Endothelial cell of umbilical vein (primary cell): ENCODE measurements at regions of chr2 and their contacts with region 1.

Region 1: DNA sequence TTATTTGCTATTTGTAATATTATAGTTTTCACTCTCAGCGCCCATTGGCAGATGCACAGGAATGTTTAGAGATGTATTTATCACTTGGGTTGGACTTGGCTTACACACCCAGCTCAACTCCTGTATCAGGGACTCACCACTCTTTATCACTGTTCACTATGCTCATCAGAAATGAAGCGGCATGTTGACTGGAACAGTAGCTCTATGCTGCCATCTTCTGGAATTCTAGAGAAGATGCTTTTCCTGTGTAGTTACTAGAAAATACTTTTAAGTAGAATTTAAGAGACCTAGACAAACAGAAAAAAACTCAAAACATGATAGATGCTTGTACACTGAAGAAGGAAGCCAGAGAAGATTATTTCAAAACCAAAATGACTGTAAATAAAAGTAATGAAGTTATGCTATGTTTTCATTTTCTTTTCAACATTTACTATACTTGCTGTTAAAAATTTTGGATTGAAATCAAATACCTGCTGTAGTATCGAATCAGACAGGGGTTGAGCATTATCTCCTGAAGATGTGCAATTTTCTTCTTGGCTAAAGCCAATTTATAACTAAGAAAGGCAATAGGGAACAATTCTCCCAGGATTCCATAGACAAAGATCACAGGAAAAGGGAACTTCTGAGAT is 47.4 kb upstream of the NXPH2 start:
- DNase-seq: peak; percentile 66
- H3K4me3 ChIP-seq: no peak overlapping the region
- H3K27ac ChIP-seq: no peak overlapping the region
- H3K4me1 ChIP-seq: no peaks in the 10 kb centered on the region
- H3K27me3 ChIP-seq: no peaks in the 10 kb centered on the region
- CTCF ChIP-seq: peak; percentile 33 to 52
- POLR2A ChIP-seq: no peak

Region 2: GRCh38 chr2:137467246-137467862 is 1360.2 kb before region 1 on chr2:
- CTCF ChIA-PET with region 1: no interaction called
- POLR2A ChIA-PET with region 1: no interaction called
- dilution Hi-C with region 1: no loop called
- intact Hi-C with region 1: loop called (anchors 5 kb)
- DNase-seq: peak; percentile 3
- H3K4me3 ChIP-seq: no peak overlapping the region
- H3K27ac ChIP-seq: no peak overlapping the region
- H3K4me1 ChIP-seq: no peaks in the 10 kb centered on the region
- H3K27me3 ChIP-seq: no peaks in the 10 kb centered on the region
- CTCF ChIP-seq: peak in 1 of 2 donors; percentile 19
- POLR2A ChIP-seq: no peak

Region 3: DNA sequence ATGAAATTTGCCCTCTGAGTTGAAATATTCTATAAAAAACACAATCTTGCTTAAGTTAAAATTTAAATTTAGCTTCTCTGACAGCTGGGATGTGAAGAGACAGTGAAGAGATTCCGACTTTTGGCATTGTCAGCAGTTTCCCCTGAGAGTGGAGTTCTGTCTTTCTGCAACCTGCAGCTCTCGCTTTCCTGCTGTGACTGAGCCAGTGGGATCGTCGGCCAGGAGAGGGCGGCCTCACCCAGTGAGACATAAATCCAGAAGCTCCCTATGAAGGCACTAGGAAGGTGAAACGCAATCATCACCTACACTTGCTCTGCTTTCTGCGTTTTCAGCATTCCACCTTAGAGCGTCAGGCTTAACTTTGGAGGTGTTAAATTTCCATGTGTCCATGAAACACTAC is 938.7 kb before region 1 on chr2:
- CTCF ChIA-PET with region 1: interaction called, 75 read pairs
- POLR2A ChIA-PET with region 1: no interaction called
- dilution Hi-C with region 1: no loop called
- intact Hi-C with region 1: loop called (anchors 1 kb)
- DNase-seq: peak; percentile 31
- H3K4me3 ChIP-seq: no peak overlapping the region
- H3K27ac ChIP-seq: no peak overlapping the region
- H3K4me1 ChIP-seq: no peaks in the 10 kb centered on the region
- H3K27me3 ChIP-seq: no peaks in the 10 kb centered on the region
- CTCF ChIP-seq: peak; percentile 23 to 67
- POLR2A ChIP-seq: no peak

Region 4: DNA sequence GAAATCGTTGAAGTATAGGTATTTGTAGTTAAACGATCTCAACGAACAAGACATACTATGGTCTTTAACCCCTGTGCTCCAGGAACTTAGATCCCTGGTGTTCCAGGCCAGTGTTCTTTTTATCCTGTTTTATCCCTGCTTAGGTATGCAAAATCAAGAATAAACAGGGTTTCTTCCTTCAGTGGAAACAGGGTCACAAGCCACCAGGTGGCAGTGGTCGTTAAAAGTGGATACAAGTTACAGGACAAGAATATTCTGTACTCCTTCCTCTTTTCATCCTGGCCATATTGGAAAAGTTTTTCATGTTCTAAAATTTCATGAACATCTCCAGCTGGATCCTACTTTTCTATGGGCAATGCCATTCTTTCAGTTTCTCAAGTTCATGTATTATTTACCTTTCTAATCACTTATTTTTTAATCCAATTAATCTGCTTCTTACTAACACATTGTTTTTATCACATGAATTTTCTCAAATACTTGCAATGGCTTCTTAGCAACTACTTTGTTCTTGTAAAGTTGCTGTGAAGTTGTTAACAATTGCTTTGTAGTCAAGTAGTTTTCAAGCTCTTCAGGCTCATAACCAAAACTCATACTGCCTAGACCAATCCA is 879.7 kb before region 1 on chr2:
- CTCF ChIA-PET with region 1: no interaction called
- POLR2A ChIA-PET with region 1: no interaction called
- dilution Hi-C with region 1: no loop called
- intact Hi-C with region 1: loop called (anchors 1 kb)
- DNase-seq: peak; percentile 82
- H3K4me3 ChIP-seq: no peak overlapping the region
- H3K27ac ChIP-seq: no peak overlapping the region
- H3K4me1 ChIP-seq: no peaks in the 10 kb centered on the region
- H3K27me3 ChIP-seq: no peaks in the 10 kb centered on the region
- CTCF ChIP-seq: peak; percentile 45 to 62
- POLR2A ChIP-seq: no peak

Region 5: DNA sequence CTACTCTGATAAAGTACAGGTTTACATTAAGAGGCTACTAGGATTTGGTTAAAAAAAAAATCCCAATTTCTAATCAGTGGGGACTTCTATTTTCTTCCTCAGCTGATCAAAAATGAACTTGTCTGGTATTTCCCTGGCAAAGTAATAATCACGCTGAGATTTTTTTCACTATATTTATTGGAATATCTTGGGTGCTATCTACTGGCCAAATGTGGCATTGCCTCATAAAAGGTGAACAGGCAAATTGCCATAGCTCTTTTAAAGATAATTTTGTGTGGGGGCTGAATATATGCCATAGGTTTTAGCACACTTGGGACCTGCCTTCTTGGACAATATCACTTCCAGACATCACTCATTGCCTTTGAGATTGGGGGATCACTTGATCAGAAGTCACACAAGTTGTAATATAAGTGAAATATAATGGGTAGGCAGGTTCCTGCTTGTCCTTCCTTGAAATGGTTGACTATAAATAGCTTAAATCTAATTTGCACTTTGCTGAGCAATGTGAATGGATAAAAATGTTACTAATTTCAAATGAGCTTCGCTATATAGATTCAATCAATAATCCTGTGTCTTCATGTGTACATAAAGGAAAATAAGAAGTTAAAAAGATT is 40.4 kb before region 1 on chr2:
- CTCF ChIA-PET with region 1: interaction called, 19 read pairs
- POLR2A ChIA-PET with region 1: no interaction called
- dilution Hi-C with region 1: no loop called
- intact Hi-C with region 1: no loop called
- DNase-seq: peak; percentile 52
- H3K4me3 ChIP-seq: no peak overlapping the region
- H3K27ac ChIP-seq: no peak overlapping the region
- H3K4me1 ChIP-seq: no peaks in the 10 kb centered on the region
- H3K27me3 ChIP-seq: peaks cover 9 to 11% of the 10 kb centered on the region in 2 experiments
- CTCF ChIP-seq: peak; percentile 32 to 47
- POLR2A ChIP-seq: no peak

Region 6: DNA sequence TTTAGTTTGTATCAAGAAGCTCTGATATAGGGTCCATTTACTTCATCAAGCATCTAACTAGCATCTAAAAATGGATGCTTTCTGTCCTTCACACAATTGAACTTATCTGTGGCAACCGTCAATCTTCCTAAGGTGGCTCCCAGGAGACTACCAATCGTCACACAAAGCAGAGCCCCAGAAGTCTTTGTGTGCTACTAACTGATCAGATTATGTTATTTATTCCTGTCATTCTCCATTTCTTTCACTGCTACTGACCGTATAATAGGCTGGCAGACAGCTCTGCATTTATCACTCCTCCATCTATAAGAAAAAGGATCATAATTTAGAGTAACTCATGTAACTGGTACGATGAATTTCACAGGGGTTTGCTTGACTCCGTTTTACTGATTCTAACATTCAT is 537.6 kb after region 1 on chr2:
- CTCF ChIA-PET with region 1: no interaction called
- POLR2A ChIA-PET with region 1: no interaction called
- dilution Hi-C with region 1: no loop called
- intact Hi-C with region 1: no loop called
- DNase-seq: no peak
- H3K4me3 ChIP-seq: no peak overlapping the region
- H3K27ac ChIP-seq: no peak overlapping the region
- H3K4me1 ChIP-seq: no peaks in the 10 kb centered on the region
- H3K27me3 ChIP-seq: no peaks in the 10 kb centered on the region
- CTCF ChIP-seq: no peak
- POLR2A ChIP-seq: no peak